ENCODE measurements at regions of chr11 and their contacts with region 1.

Region 1: GRCh38 chr11:74311352-74311926 is at the start of gene P4HA3:
- DNase-seq: peak; percentile 54 to 79 (median 66)
- H3K4me3 ChIP-seq: peak within 1 kb of the TSS in 2 of 4 donors; percentile 22 to 51
- H3K27ac ChIP-seq: no peak within 1 kb of the TSS
- H3K4me1 ChIP-seq: peaks cover 0 to 14% of the 10 kb centered on the region in 2 donors
- H3K27me3 ChIP-seq: no peaks in the 10 kb centered on the region
- CTCF ChIP-seq: no peak
- POLR2A ChIP-seq: no peak
- total RNA-seq, gene P4HA3: 0.52 to 2.3 (median 0.96) TPM in 8 of 9 donors, not detected in the other

Region 2: GRCh38 chr11:74269161-74269811 is 42.2 kb before region 1 on chr11:
- intact Hi-C with region 1: loop called in 1 of 2 experiments (anchors 10 kb)
- DNase-seq: peak in 1 of 7 donors; percentile 23
- H3K4me3 ChIP-seq: no peak overlapping the region
- H3K27ac ChIP-seq: no peak overlapping the region
- H3K4me1 ChIP-seq: no peaks in the 10 kb centered on the region
- H3K27me3 ChIP-seq: no peaks in the 10 kb centered on the region
- CTCF ChIP-seq: no peak
- POLR2A ChIP-seq: no peak